Psoas muscle (tissue), 8 donors: ENCODE measurements at regions of chr2 and their contacts with region 1.

Region 1: DNA sequence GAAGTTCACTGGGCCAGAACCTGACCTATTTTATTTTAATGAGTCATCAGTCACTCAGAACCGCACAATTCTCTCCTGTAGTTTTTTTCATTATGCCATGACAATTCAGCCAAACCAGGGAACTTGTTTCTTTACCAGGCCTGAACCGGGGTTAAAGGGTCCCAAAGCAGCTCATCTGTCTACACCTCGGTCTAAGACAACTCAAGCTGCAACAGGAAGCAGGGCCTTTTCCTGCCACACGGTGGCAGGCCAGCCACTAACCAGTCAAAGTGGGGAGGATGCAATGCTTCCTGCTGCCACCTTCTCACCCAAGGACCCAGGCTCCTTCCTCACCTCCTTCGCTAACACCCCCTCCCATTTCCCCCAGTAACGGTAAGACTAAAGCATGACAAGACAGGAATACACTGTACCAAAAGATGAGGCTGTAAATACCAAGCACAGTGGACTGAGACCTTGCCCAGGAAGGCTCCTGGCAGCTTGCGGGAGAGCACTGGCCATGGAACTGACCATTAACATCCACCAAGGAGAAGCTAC is 56.7 kb upstream of the ACKR3 start:
- DNase-seq: peak; percentile 55 to 77
- ATAC-seq: peak; percentile 73 to 94 (median 89)
- H3K4me3 ChIP-seq: no peak overlapping the region
- H3K27ac ChIP-seq: no peak overlapping the region
- H3K4me1 ChIP-seq: no peaks in the 10 kb centered on the region
- H3K27me3 ChIP-seq: peaks cover 0 to 3% (median 2%) of the 10 kb centered on the region in 3 donors
- CTCF ChIP-seq: peak; percentile 78

Region 2: GRCh38 chr2:237026981-237027711 is 514.2 kb after region 1 on chr2:
- intact Hi-C with region 1: loop called (anchors 1 to 2 kb)
- DNase-seq: peak; percentile 77 to 83
- ATAC-seq: peak; percentile 93 to 98 (median 94)
- H3K4me3 ChIP-seq: no peak overlapping the region
- H3K27ac ChIP-seq: no peak overlapping the region
- H3K4me1 ChIP-seq: no peaks in the 10 kb centered on the region
- H3K27me3 ChIP-seq: peaks cover 0 to 2% (median 0%) of the 10 kb centered on the region in 3 donors
- CTCF ChIP-seq: peak; percentile 93

Region 3: GRCh38 chr2:237060534-237061312 is 547.8 kb after region 1 on chr2:
- intact Hi-C with region 1: loop called (anchors 5 to 10 kb)
- DNase-seq: no peak
- ATAC-seq: peak; percentile 46 to 91 (median 79)
- H3K4me3 ChIP-seq: no peak overlapping the region
- H3K27ac ChIP-seq: no peak overlapping the region
- H3K4me1 ChIP-seq: peaks cover 9% of the 10 kb centered on the region
- H3K27me3 ChIP-seq: no peaks in the 10 kb centered on the region
- CTCF ChIP-seq: peak; percentile 57